T-cell (primary cell): ENCODE measurements at regions of chr12 and their contacts with region 1.

Region 1: GRCh38 chr12:13100882-13101769 is 2.3 kb downstream of the GSG1 start:
- DNase-seq: peak; percentile 83 to 96 (median 93)
- ATAC-seq: peak; percentile 89 to 92 (median 92)
- H3K4me3 ChIP-seq: peak overlapping the region; percentile 55 to 66
- H3K4me3 Mint-ChIP-seq: peak overlapping the region; percentile 70 to 81 (median 80)
- H3K27ac ChIP-seq: peak overlapping the region; percentile 93
- H3K27ac Mint-ChIP-seq: peak overlapping the region; percentile 90 to 91
- H3K4me1 ChIP-seq: peaks cover 18 to 37% of the 10 kb centered on the region in 2 experiments
- H3K4me1 Mint-ChIP-seq: peaks cover 41 to 51% (median 50%) of the 10 kb centered on the region in 3 donors
- H3K27me3 ChIP-seq: no peaks in the 10 kb centered on the region
- H3K27me3 Mint-ChIP-seq: no peaks in the 10 kb centered on the region

Region 2: GRCh38 chr12:12254553-12254952 is 846.6 kb before region 1 on chr12:
- CTCF ChIA-PET with region 1: no interaction called
- POLR2A ChIA-PET with region 1: interaction called in 1 of 2 experiments, 11 read pairs
- DNase-seq: no peak
- ATAC-seq: no peak
- H3K4me3 ChIP-seq: no peak overlapping the region
- H3K4me3 Mint-ChIP-seq: no peak overlapping the region
- H3K27ac ChIP-seq: no peak overlapping the region
- H3K27ac Mint-ChIP-seq: no peak overlapping the region
- H3K4me1 ChIP-seq: no peaks in the 10 kb centered on the region
- H3K4me1 Mint-ChIP-seq: peaks cover 8% of the 10 kb centered on the region in 3 donors
- H3K27me3 ChIP-seq: peaks cover 0 to 11% of the 10 kb centered on the region in 2 experiments
- H3K27me3 Mint-ChIP-seq: peaks cover 0 to 1% of the 10 kb centered on the region in 2 donors

Region 3: GRCh38 chr12:13179211-13180074 is 78.3 kb after region 1 on chr12:
- CTCF ChIA-PET with region 1: no interaction called
- POLR2A ChIA-PET with region 1: interaction called in 1 of 2 experiments, 11 read pairs
- DNase-seq: peak in 33 of 35 experiments; percentile 6 to 61 (median 31)
- ATAC-seq: peak; percentile 89 to 96 (median 96)
- H3K4me3 ChIP-seq: peak overlapping the region; percentile 29 to 72
- H3K4me3 Mint-ChIP-seq: peak overlapping the region; percentile 62 to 83 (median 69)
- H3K27ac ChIP-seq: peak overlapping the region; percentile 47
- H3K27ac Mint-ChIP-seq: peak overlapping the region; percentile 82 to 88
- H3K4me1 ChIP-seq: peaks cover 13 to 18% of the 10 kb centered on the region in 2 experiments
- H3K4me1 Mint-ChIP-seq: peaks cover 22 to 27% (median 26%) of the 10 kb centered on the region in 3 donors
- H3K27me3 ChIP-seq: peaks cover 0 to 15% of the 10 kb centered on the region in 2 experiments
- H3K27me3 Mint-ChIP-seq: peaks cover 0 to 13% of the 10 kb centered on the region in 2 donors

Region 4: DNA sequence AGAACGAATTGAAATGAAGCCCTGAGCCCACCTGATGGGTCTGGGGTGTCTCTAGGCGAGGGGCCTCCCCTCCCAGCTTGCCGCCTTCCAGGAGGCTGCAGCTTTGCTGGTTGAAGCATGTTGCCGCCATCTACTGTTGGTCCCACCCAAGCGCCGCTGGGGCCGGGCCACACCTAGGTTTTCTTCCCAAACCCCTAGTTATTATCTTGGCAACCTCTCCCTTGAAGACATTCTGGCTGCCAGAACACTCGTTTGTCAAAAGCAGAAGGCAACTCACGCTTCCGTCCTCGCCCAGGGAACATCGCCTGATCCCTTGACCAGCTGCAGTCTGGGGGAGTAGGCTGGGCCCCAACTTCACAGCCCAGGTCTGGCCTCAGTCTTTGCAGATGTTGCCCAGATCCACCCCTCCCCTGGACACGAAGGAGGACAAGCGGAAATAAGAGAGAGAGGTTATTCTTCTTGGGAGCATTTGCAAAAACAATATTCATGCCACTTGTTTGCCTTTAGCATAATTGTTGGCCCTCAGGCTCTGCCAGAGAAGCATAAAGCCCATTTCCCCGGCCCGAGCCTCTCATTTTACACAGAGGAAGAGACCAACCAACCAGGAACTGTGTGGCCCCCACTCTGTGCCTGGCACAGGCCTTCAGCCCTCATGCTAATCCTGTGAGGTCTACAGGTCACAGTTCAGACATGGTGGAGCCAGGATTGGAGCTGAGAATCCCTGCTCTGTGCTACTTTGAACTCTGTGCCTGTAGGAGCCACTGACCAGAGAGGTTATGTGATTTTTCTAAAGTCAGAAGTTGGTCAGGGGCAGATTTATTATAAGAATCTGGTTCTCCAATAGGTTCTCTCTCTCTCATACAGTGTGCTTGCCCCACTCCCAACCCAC is 102.2 kb after region 1 on chr12:
- CTCF ChIA-PET with region 1: no interaction called
- POLR2A ChIA-PET with region 1: no interaction called
- DNase-seq: no peak
- ATAC-seq: no peak
- H3K4me3 ChIP-seq: no peak overlapping the region
- H3K4me3 Mint-ChIP-seq: no peak overlapping the region
- H3K27ac ChIP-seq: no peak overlapping the region
- H3K27ac Mint-ChIP-seq: no peak overlapping the region
- H3K4me1 ChIP-seq: peaks cover 0 to 6% of the 10 kb centered on the region in 2 experiments
- H3K4me1 Mint-ChIP-seq: peaks cover 0 to 15% (median 14%) of the 10 kb centered on the region in 3 donors
- H3K27me3 ChIP-seq: peaks cover 0 to 2% of the 10 kb centered on the region in 2 experiments
- H3K27me3 Mint-ChIP-seq: peaks cover 2 to 3% of the 10 kb centered on the region in 2 donors